Transverse colon (tissue), 4 donors: ENCODE measurements at regions of chr2 and their contacts with region 1.

Region 1: DNA sequence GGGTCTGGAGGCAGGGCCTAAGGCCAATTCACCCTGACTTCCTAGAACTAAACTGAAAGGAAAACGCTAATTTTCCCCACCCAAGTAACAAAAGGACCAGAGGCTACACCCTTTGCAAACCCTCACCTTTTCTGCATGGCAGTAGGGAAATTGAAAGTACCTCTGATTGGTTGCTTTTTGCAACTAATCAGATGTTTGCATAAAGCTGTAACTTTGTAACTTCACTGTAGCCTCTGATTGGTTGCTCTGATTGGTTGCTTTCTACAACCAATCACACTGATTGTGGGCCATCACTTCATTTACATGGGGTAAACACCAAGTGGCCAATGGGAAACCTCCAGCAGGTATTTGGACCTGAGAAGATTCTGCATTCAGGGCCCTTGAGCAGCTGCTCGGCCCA is 20.8 kb downstream of the EIPR1 start:
- DNase-seq: no peak
- H3K4me3 ChIP-seq: no peak overlapping the region
- H3K27ac ChIP-seq: no peak overlapping the region
- H3K4me1 ChIP-seq: no peaks in the 10 kb centered on the region
- H3K27me3 ChIP-seq: no peaks in the 10 kb centered on the region
- CTCF ChIP-seq: no peak
- EP300 ChIP-seq: no peak
- POLR2A ChIP-seq: no peak

Region 2: GRCh38 chr2:2828774-2829368 is 527.9 kb before region 1 on chr2:
- in situ Hi-C with region 1: no loop called
- intact Hi-C with region 1: no loop called
- DNase-seq: no peak
- H3K4me3 ChIP-seq: no peak overlapping the region
- H3K27ac ChIP-seq: no peak overlapping the region
- H3K4me1 ChIP-seq: no peaks in the 10 kb centered on the region
- H3K27me3 ChIP-seq: no peaks in the 10 kb centered on the region
- CTCF ChIP-seq: no peak
- EP300 ChIP-seq: no peak
- POLR2A ChIP-seq: no peak

Region 3: GRCh38 chr2:3062476-3063260 is 294.1 kb before region 1 on chr2:
- in situ Hi-C with region 1: no loop called
- intact Hi-C with region 1: loop called (anchors 10 kb)
- DNase-seq: no peak
- H3K4me3 ChIP-seq: no peak overlapping the region
- H3K27ac ChIP-seq: no peak overlapping the region
- H3K4me1 ChIP-seq: no peaks in the 10 kb centered on the region
- H3K27me3 ChIP-seq: no peaks in the 10 kb centered on the region
- CTCF ChIP-seq: no peak
- EP300 ChIP-seq: no peak
- POLR2A ChIP-seq: no peak

Region 4: GRCh38 chr2:3558205-3559014 is 201.6 kb after region 1 on chr2 and contains the start of gene RNASEH1:
- in situ Hi-C with region 1: no loop called
- intact Hi-C with region 1: no loop called
- DNase-seq: peak; percentile 99
- H3K4me3 ChIP-seq: peak within 1 kb of the TSS; percentile 88 to 95 (median 94)
- H3K27ac ChIP-seq: peak within 1 kb of the TSS; percentile 92 to 97 (median 95)
- H3K4me1 ChIP-seq: peaks cover 8 to 17% (median 17%) of the 10 kb centered on the region in 4 donors
- H3K27me3 ChIP-seq: no peaks in the 10 kb centered on the region
- CTCF ChIP-seq: no peak
- EP300 ChIP-seq: no peak
- POLR2A ChIP-seq: peak; percentile 90
- total RNA-seq, gene RNASEH1: 7.4 to 12.4 (median 11.0) TPM

Region 5: DNA sequence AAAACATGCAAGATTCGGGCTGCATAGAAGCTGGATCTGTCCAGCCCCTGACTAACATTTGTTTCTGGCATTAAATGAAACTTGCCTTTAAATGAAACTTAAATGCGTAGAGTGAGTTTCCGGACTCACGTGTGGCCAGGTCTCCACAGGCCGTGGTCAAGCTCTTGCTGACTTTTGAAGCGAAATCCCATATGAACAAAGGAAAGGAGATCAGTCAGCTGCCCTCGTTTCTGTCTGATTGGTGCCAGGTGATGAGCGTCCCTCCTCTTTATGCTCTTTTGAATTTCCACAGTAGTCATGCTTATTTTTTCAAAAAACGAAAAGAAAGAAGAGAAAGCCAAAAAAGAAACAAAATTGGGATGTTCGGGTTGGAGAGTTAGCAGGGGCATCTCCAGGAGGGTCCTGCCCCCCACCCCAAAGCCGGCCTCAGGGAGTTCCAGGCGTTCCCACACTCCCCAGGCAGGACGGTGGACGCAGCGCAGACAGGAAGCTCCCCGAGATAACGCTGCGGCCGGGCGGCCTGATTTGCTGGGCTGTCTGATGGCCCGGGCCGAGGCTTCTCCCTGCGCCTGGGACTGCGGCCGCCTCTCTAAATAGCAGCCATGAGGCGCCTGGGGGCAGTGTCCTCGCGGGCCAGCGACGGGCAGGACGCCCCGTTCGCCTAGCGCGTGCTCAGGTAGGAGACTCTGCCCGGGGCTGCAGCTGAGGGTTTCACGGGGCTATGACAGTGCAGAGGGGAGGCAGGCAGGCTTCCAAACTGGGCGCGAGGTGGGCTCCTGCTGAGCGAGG is 237.9 kb after region 1 on chr2 and contains the start of gene COLEC11:
- in situ Hi-C with region 1: no loop called
- intact Hi-C with region 1: no loop called
- DNase-seq: no peak
- H3K4me3 ChIP-seq: no peak within 1 kb of the TSS
- H3K27ac ChIP-seq: no peak within 1 kb of the TSS
- H3K4me1 ChIP-seq: no peaks in the 10 kb centered on the region
- H3K27me3 ChIP-seq: no peaks in the 10 kb centered on the region
- CTCF ChIP-seq: no peak
- EP300 ChIP-seq: no peak
- POLR2A ChIP-seq: no peak
- total RNA-seq, gene COLEC11: 1.6 to 2.0 TPM in 2 of 4 donors, not detected in the others